ENCODE measurements at regions of chr2 and their contacts with region 1.

Region 1: GRCh38 chr2:209423562-209424198 is at the start of gene MAP2:
- H3K4me3 ChIP-seq: peak within 1 kb of the TSS; percentile 64
- H3K27ac ChIP-seq: peak within 1 kb of the TSS; percentile 60; the same call in 1 of the 2 replicates
- H3K4me1 ChIP-seq: peaks cover 11% of the 10 kb centered on the region
- CTCF ChIP-seq: peak; percentile 71

Region 2: DNA sequence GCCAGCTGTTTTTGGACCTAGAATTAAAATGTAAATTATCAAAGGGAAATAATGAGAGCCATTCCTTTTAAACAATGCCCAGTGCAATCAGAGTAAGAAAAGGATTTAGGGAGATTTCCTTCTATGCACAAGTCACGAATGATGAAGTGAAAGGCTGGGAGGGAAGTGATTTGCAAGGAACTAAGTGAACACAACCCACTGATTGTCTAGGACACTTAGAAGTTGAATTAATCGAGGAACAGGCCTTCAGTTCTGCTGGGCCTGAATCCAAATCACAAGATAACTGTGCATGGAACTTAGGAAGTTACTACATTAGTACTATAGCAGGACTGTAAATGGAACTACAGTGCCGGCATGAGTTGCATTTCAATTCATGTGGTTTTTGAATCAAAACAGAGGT is 17.9 kb after region 1 on chr2:
- CTCF ChIA-PET with region 1: interaction called, 20 read pairs
- POLR2A ChIA-PET with region 1: no interaction called
- H3K4me3 ChIP-seq: no peak overlapping the region
- H3K27ac ChIP-seq: no peak overlapping the region
- H3K4me1 ChIP-seq: no peaks in the 10 kb centered on the region; the same call in 1 of the 2 replicates
- CTCF ChIP-seq: no peak

Region 3: GRCh38 chr2:209501561-209501960 is 77.9 kb after region 1 on chr2:
- CTCF ChIA-PET with region 1: interaction called, 10 read pairs
- POLR2A ChIA-PET with region 1: interaction called, 5 read pairs
- H3K4me3 ChIP-seq: no peak overlapping the region
- H3K27ac ChIP-seq: no peak overlapping the region
- H3K4me1 ChIP-seq: peaks cover 18% of the 10 kb centered on the region
- CTCF ChIP-seq: no peak

Region 4: GRCh38 chr2:209523867-209524266 is 100.2 kb after region 1 on chr2:
- CTCF ChIA-PET with region 1: interaction called, 10 read pairs
- POLR2A ChIA-PET with region 1: no interaction called
- H3K4me3 ChIP-seq: no peak overlapping the region
- H3K27ac ChIP-seq: no peak overlapping the region
- H3K4me1 ChIP-seq: peaks cover 6% of the 10 kb centered on the region; the same call in 1 of the 2 replicates
- CTCF ChIP-seq: no peak

Region 5: GRCh38 chr2:209556354-209556961 is 132.8 kb after region 1 on chr2:
- CTCF ChIA-PET with region 1: interaction called, 51 read pairs
- POLR2A ChIA-PET with region 1: no interaction called
- H3K4me3 ChIP-seq: no peak overlapping the region
- H3K27ac ChIP-seq: no peak overlapping the region
- H3K4me1 ChIP-seq: no peaks in the 10 kb centered on the region
- CTCF ChIP-seq: peak; percentile 67

Region 6: GRCh38 chr2:209577376-209578357 is 154.0 kb after region 1 on chr2:
- CTCF ChIA-PET with region 1: interaction called, 18 read pairs
- POLR2A ChIA-PET with region 1: no interaction called
- H3K4me3 ChIP-seq: no peak overlapping the region
- H3K27ac ChIP-seq: no peak overlapping the region
- H3K4me1 ChIP-seq: no peaks in the 10 kb centered on the region
- CTCF ChIP-seq: no peak